Head of caudate nucleus (tissue), 42 donors: ENCODE measurements at regions of chr3 and their contacts with region 1.

Region 1: DNA sequence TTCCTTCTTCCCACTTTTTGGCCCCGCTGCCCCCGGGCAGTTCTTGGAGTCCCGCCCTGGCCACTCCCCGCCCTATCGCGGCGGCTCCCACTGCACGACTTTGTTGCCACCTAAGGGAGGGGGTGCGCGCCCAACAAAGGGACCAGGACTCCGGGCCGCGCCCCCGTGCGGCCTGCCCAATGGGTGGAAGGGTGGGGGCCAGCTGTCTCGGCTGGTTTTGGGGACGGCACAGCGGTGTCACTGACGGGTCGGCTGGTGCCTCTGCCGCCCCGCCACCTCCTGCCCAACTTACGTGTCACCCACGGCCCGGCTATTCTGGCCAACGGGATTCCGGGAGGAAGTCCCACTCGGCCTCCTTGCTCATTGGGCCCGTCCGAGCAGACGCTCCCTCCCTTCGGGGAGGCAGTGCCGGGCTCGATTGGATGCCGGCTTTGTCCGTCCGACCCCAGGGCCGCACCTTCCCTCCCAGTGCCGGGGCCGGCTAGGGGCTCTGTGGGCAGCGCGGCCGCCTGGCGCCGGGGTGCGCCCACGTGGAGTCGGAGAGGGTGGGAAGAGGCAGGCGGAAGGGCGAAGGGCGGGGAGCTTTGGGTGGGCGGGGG is at the start of gene GOLIM4:
- DNase-seq: peak; percentile 82 to 97 (median 93)

Region 2: GRCh38 chr3:168165390-168166269 is 69.9 kb after region 1 on chr3:
- intact Hi-C with region 1: loop called (anchors 5 kb)
- DNase-seq: peak in 41 of 42 donors; percentile 9 to 90 (median 68)